ENCODE measurements at regions of chr15 and their contacts with region 1.

Region 1: GRCh38 chr15:64611085-64611725 is 150.8 kb downstream of the ZNF609 start:
- DNase-seq: no peak
- H3K4me3 ChIP-seq: no peak overlapping the region
- H3K27ac ChIP-seq: no peak overlapping the region
- H3K4me1 ChIP-seq: no peaks in the 10 kb centered on the region
- H3K27me3 ChIP-seq: no peaks in the 10 kb centered on the region
- CTCF ChIP-seq: no peak

Region 2: DNA sequence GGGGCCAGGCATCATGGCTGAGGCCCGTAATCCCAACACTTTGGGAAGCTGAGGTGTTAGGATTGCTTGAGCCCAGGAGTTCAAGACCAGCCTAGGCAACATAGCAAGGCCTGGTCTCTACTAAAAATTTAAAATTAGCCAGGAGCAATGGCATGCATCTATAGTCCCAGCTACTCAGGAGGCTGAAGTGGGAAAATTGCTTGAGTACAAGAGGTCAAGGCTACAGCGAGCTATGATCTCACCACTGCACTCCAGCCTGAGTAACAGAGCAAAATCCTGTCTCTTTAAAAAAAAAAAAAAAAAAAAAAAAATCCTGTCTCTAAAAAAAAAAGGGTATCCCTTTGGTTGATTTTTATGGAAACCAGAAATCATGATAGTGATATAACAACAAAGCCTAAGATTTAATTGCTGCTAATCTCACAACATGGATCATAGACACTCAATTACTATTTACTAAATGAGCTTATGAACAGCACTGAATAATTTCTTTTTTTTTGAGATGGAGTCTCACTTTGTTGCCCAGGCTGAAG is 242.1 kb before region 1 on chr15:
- CTCF ChIA-PET with region 1: no interaction called
- dilution Hi-C with region 1: no loop called
- in situ Hi-C with region 1: no loop called
- intact Hi-C with region 1: no loop called
- DNase-seq: no peak
- H3K4me3 ChIP-seq: no peak overlapping the region
- H3K27ac ChIP-seq: no peak overlapping the region
- H3K4me1 ChIP-seq: no peaks in the 10 kb centered on the region
- H3K27me3 ChIP-seq: no peaks in the 10 kb centered on the region
- CTCF ChIP-seq: no peak

Region 3: GRCh38 chr15:64571857-64572291 is 39.3 kb before region 1 on chr15:
- CTCF ChIA-PET with region 1: no interaction called
- dilution Hi-C with region 1: loop called (anchors 5 kb)
- in situ Hi-C with region 1: no loop called
- intact Hi-C with region 1: no loop called
- DNase-seq: no peak
- H3K4me3 ChIP-seq: no peak overlapping the region
- H3K27ac ChIP-seq: no peak overlapping the region
- H3K4me1 ChIP-seq: peaks cover 22% of the 10 kb centered on the region
- H3K27me3 ChIP-seq: no peaks in the 10 kb centered on the region
- CTCF ChIP-seq: no peak

Measured in mammary epithelial cell (primary cell).